Calu3 (cell line): ENCODE measurements at regions of chr5 and their contacts with region 1.

Region 1: DNA sequence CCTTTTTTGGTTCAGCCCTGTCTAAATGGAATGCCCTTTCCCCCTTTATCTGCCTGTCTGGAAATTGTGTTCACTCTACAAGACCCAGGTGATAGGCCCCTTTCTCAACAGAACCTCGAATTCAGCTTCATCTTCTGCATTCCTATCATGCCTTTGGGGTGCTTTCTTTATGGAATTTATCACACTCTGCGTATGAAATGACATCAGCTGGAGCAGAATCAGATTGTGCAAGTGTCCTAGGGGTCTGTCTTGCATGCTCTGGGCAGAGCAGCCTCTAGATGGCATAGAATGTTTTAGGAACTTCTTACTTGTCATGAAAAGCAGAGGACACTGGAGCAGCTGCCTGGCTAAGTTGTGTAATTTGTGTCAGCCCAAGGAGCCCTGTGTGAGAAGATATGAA is 84.9 kb downstream of the ISL1 start:
- DNase-seq: no peak
- H3K4me3 Mint-ChIP-seq: no peak overlapping the region
- H3K27ac Mint-ChIP-seq: no peak overlapping the region
- H3K4me1 Mint-ChIP-seq: peaks cover 38% of the 10 kb centered on the region
- H3K27me3 Mint-ChIP-seq: no peaks in the 10 kb centered on the region
- CTCF ChIP-seq: no peak

Region 2: DNA sequence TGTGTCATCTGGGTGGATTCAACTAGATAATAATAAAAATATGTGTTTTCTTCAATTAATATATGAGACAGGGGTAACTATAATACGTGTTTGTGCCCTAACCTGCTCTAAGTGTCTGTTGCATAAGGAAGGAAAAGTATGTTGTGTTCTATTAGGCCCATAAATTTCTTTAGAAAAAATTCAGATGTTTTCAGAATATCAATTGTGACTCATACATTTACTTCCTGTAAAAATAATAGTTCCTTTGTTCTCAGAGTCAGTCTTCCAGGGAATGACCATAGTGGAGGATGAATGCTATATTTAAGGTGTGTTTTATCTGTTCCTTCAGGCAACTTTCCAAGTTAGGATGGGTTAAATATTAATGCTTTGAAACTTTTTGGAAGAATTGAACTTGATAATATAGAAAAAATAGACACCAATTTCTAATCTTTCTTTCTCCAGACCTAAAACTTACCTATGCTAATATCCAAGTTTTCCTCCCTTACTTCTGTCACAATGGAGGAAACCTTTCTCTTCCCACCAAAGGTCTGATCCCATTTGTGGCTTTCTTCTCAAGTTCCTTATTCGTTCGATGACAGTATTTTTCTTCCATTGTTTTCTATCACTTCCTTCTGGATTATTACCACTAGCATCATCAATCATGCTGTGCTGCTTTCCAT is 35.0 kb before region 1 on chr5:
- CTCF ChIA-PET with region 1: no interaction called
- intact Hi-C with region 1: loop called (anchors 5 kb)
- DNase-seq: no peak
- H3K4me3 Mint-ChIP-seq: peak overlapping the region; percentile 30
- H3K27ac Mint-ChIP-seq: peak overlapping the region; percentile 89
- H3K4me1 Mint-ChIP-seq: peaks cover 30% of the 10 kb centered on the region
- H3K27me3 Mint-ChIP-seq: no peaks in the 10 kb centered on the region
- CTCF ChIP-seq: no peak

Region 3: DNA sequence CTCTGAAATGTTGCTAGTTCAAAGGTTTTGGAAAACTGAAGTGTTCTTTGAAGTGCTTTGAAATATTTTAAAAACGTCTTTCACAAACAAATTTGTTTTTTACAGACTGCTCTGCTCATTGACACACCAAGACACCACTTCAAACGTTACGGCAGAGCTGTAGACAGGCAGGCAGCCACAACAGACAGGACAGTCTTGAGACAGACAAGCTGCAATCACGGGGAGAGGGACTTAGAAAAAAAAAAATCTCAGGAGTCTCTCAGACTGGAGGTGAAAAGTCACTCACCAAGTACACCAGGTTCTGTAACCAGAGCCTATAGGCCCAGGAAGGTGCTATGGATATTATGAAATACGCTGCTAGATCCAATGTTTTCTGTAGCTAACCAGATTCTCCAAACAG is 50.4 kb after region 1 on chr5:
- CTCF ChIA-PET with region 1: no interaction called
- intact Hi-C with region 1: no loop called
- DNase-seq: no peak
- H3K4me3 Mint-ChIP-seq: no peak overlapping the region
- H3K27ac Mint-ChIP-seq: no peak overlapping the region
- H3K4me1 Mint-ChIP-seq: no peaks in the 10 kb centered on the region
- H3K27me3 Mint-ChIP-seq: no peaks in the 10 kb centered on the region
- CTCF ChIP-seq: no peak

Region 4: GRCh38 chr5:51684794-51685355 is 216.7 kb after region 1 on chr5:
- CTCF ChIA-PET with region 1: no interaction called
- intact Hi-C with region 1: loop called (anchors 5 kb)
- DNase-seq: no peak
- H3K4me3 Mint-ChIP-seq: no peak overlapping the region
- H3K27ac Mint-ChIP-seq: no peak overlapping the region
- H3K4me1 Mint-ChIP-seq: no peaks in the 10 kb centered on the region
- H3K27me3 Mint-ChIP-seq: no peaks in the 10 kb centered on the region
- CTCF ChIP-seq: peak; percentile 39

Region 5: GRCh38 chr5:51829691-51830090 is 361.5 kb after region 1 on chr5:
- CTCF ChIA-PET with region 1: no interaction called
- intact Hi-C with region 1: loop called (anchors 10 kb)
- DNase-seq: no peak
- H3K4me3 Mint-ChIP-seq: peak overlapping the region; percentile 54
- H3K27ac Mint-ChIP-seq: peak overlapping the region; percentile 62
- H3K4me1 Mint-ChIP-seq: peaks cover 23% of the 10 kb centered on the region
- H3K27me3 Mint-ChIP-seq: no peaks in the 10 kb centered on the region
- CTCF ChIP-seq: no peak

Region 6: DNA sequence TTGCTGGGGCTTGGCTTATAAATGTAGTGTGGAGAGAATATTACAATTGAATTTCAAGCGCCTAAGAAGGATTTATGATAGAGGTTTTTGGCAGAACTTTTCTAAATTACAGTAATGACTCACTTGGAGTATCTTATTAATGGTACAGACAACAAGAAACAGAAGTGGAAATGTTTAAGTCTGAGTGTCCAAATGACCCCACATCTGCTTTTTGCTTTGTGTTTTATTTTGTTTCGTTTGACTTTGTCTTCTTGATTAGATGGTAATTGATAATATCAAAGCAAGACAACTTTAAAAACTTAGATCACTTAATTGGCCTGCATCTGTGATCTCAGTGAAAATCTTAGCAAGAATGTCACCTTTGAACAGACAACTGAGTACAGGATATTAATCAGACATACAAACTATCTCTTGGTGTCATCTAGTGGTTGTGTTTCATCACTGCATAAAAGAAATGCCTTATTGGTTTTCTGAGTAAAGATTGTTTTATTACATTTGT is 492.5 kb after region 1 on chr5:
- CTCF ChIA-PET with region 1: no interaction called
- intact Hi-C with region 1: loop called (anchors 10 kb)
- DNase-seq: no peak
- H3K4me3 Mint-ChIP-seq: no peak overlapping the region
- H3K27ac Mint-ChIP-seq: no peak overlapping the region
- H3K4me1 Mint-ChIP-seq: no peaks in the 10 kb centered on the region
- H3K27me3 Mint-ChIP-seq: no peaks in the 10 kb centered on the region
- CTCF ChIP-seq: no peak